Cardiac septum (tissue), 1 donor: ENCODE measurements at regions of chr12 and their contacts with region 1.

Region 1: DNA sequence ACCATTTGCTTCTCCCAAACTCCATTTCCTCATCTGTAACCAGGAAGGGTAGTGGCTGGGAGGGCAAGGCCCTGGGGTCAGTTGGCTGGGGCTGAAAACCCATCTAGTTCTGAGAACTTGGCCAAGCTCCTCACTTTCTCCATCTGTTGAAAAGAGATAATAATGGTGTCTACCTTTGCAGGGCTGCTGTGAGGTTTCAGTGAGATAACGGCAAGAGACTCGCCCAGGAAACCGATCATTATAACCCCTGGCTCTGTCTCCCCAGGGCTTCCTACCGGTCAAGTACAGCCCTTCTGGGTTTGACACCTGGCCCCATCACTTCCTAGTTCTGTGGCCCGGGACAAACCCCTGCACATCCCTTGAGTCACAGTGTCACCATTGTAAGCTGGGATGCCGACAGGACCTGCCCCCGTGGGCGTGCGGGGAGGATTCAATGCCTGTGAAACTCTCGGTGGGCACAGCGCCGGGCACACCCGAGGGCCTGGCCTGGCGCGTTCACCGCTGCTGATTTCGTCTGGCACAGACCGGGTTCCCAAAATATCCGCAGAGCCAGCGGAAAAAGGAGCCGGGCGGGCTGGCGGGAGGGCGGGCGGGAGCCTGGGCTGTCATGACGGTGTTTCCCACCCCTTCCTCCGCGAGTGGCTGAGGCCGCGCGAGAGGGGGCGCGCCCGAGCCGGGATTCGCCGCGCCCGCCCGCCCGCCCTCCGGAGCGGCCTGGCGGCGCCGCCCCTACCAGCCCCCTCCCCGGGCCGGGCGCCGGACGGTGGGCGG is 4.4 kb downstream of the KMT5A start:
- DNase-seq: peak; percentile 93

Region 2: GRCh38 chr12:123365025-123365917 is 23.1 kb before region 1 on chr12:
- intact Hi-C with region 1: loop called (anchors 2 kb)
- DNase-seq: peak; percentile 99

Region 3: GRCh38 chr12:123436017-123436964 is 47.9 kb after region 1 on chr12 and contains the start of gene RILPL2:
- intact Hi-C with region 1: loop called (anchors 5 kb)
- DNase-seq: peak; percentile 98
- total RNA-seq, gene RILPL2: 1.6 TPM

Region 4: GRCh38 chr12:123533672-123534643 is 145.6 kb after region 1 on chr12 and contains the start of gene RILPL1:
- intact Hi-C with region 1: loop called (anchors 5 kb)
- DNase-seq: peak; percentile 83
- total RNA-seq, gene RILPL1: 85.3 TPM

Region 5: GRCh38 chr12:123580772-123581171 is 192.4 kb after region 1 on chr12:
- intact Hi-C with region 1: loop called (anchors 1 kb)
- DNase-seq: no peak